ENCODE measurements at regions of chr3 and their contacts with region 1.

Region 1: GRCh38 chr3:88058591-88059368 is at the starts of genes CGGBP1 and ZNF654:
- DNase-seq: peak; percentile 99
- H3K4me3 Mint-ChIP-seq: peak within 1 kb of the TSS; percentile 95
- H3K27ac Mint-ChIP-seq: peak within 1 kb of the TSS; percentile 96
- H3K4me1 Mint-ChIP-seq: peaks cover 49% of the 10 kb centered on the region
- H3K27me3 Mint-ChIP-seq: no peaks in the 10 kb centered on the region
- total RNA-seq, gene CGGBP1: 90.5 and 95.0 TPM in 2 replicates
- total RNA-seq, gene ZNF654: 19.4 and 19.8 TPM in 2 replicates

Region 2: GRCh38 chr3:87333393-87333892 is 725.3 kb before region 1 on chr3:
- intact Hi-C with region 1: loop called (anchors 2 kb)
- DNase-seq: no peak
- H3K4me3 Mint-ChIP-seq: no peak overlapping the region
- H3K27ac Mint-ChIP-seq: peak overlapping the region; percentile 67
- H3K4me1 Mint-ChIP-seq: peaks cover 17% of the 10 kb centered on the region
- H3K27me3 Mint-ChIP-seq: no peaks in the 10 kb centered on the region

Region 3: GRCh38 chr3:88019024-88019423 is 39.8 kb before region 1 on chr3:
- intact Hi-C with region 1: loop called (anchors 5 kb)
- DNase-seq: peak; percentile 21
- H3K4me3 Mint-ChIP-seq: no peak overlapping the region
- H3K27ac Mint-ChIP-seq: no peak overlapping the region
- H3K4me1 Mint-ChIP-seq: peaks cover 27% of the 10 kb centered on the region
- H3K27me3 Mint-ChIP-seq: peaks cover 17% of the 10 kb centered on the region

Region 4: DNA sequence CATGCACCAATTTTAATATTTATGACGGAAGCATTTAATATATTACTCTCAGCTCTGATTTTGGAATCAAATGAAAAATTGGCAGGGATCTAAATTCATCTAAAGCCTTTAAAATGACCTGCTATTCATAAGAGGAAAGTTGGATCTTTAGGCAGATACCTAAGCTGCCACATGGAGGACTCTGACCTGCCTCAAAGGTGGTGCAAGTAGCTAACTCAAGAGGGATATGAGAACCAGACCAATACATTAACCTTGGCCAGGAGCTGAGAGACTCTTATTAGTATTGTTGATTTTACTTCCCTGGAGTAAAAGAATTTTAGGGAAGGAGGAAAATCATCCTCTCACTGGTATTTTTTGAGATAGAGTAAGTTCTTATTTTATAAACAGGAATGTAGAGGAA is 17.9 kb after region 1 on chr3:
- intact Hi-C with region 1: loop called (anchors 2 kb)
- DNase-seq: no peak
- H3K4me3 Mint-ChIP-seq: no peak overlapping the region
- H3K27ac Mint-ChIP-seq: no peak overlapping the region
- H3K4me1 Mint-ChIP-seq: peaks cover 30% of the 10 kb centered on the region
- H3K27me3 Mint-ChIP-seq: no peaks in the 10 kb centered on the region

Region 5: GRCh38 chr3:88101142-88101541 is 42.4 kb after region 1 on chr3:
- intact Hi-C with region 1: no loop called
- DNase-seq: no peak
- H3K4me3 Mint-ChIP-seq: no peak overlapping the region
- H3K27ac Mint-ChIP-seq: no peak overlapping the region
- H3K4me1 Mint-ChIP-seq: peaks cover 8% of the 10 kb centered on the region
- H3K27me3 Mint-ChIP-seq: no peaks in the 10 kb centered on the region

Region 6: DNA sequence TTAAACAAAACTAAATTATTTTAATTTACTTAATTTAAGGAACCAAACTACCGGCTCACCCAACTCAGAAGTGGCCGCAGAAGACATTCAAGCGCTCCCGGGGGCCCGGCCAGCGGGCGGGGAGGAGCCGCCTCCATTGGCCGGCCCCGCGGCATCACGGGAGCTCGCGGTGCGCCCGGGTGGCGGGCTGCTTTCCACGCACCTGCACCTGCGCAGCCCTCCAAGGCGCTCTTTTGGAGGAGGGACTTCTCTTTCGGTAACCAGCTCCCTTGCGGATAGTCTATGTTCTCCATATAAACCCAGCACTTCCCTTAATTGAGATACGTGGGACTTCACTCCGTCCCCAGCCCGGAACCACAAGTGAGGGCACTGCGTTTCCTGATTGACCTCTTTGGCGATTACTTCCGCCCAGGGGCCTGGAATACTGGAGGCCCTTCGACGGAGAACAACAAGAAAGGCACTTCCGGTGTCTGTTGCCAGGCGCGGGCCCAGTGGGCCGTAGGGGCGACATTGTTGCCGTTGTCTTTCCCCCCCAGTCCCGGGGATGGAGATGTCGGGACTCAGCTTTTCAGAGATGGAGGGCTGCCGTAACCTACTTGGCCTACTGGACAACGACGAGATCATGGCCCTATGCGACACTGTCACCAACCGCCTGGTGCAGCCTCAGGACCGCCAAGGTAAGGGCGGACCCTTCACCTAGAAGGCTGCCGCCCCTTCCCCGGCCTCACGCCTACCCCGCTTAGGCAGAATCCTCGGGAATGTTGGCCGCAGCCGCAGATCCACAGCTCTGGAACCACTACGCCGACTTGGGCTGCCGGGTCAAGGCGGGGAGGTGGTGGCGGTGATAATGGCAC is 91.0 kb after region 1 on chr3 and contains the start of gene C3orf38:
- intact Hi-C with region 1: loop called (anchors 1 kb)
- DNase-seq: peak; percentile 80
- H3K4me3 Mint-ChIP-seq: peak within 1 kb of the TSS; percentile 99
- H3K27ac Mint-ChIP-seq: peak within 1 kb of the TSS; percentile 99
- H3K4me1 Mint-ChIP-seq: peaks cover 40% of the 10 kb centered on the region
- H3K27me3 Mint-ChIP-seq: no peaks in the 10 kb centered on the region
- total RNA-seq, gene C3orf38: 21.5 and 23.7 TPM in 2 replicates